Caco-2 (cell line): ENCODE measurements at regions of chr5 and their contacts with region 1.

Region 1: DNA sequence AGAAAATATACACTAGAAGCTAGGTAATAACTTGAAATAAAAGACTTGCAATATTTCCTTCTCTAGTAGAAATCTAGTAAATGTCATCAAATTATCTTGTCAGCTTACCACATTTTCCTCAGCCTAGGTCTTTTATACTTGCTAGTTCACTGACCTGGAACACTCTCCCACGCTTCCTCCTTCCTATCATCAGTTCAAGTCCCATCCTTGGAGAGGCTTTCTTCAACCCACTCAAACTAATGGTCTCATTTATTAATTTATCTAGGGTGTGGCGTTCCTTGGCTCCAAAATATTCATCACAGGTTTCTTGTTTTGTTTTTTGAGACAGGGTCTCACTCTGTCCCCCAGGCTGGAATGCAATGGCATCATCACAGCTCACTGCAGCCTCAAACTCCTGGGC is 2.9 kb downstream of the FAM13B start:
- DNase-seq: no peak
- H3K4me3 ChIP-seq: no peak overlapping the region
- H3K4me3 Mint-ChIP-seq: no peak overlapping the region
- H3K27ac Mint-ChIP-seq: no peak overlapping the region
- H3K4me1 ChIP-seq: peaks cover 12% of the 10 kb centered on the region
- H3K4me1 Mint-ChIP-seq: peaks cover 14% of the 10 kb centered on the region
- H3K27me3 ChIP-seq: no peaks in the 10 kb centered on the region
- H3K27me3 Mint-ChIP-seq: no peaks in the 10 kb centered on the region
- CTCF ChIP-seq: no peak

Region 2: DNA sequence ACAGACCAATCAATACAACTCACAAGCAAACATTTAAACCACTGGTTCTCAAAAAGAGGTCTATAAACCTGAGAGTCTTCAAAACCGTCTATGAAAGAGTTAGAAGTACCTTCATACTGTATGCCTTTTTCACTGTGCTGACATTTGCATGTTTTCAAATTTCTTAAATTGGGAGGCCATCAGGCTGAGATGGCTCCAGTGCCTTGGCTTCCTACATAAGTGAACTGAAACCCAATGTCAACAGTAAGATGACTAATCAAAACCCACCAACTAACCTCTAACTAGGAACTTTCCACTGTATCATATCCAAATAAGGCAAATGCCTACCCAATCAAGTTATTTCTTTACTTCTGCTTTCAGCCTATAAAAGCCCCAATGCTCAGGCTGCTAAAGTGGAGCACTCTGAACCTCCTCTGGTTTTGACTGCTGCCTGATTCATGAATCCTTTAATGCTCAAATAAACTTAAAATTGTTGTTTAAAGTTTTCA is 32.2 kb before region 1 on chr5:
- CTCF ChIA-PET with region 1: no interaction called
- POLR2A ChIA-PET with region 1: no interaction called
- intact Hi-C with region 1: no loop called
- DNase-seq: no peak
- H3K4me3 ChIP-seq: no peak overlapping the region
- H3K4me3 Mint-ChIP-seq: no peak overlapping the region
- H3K27ac Mint-ChIP-seq: no peak overlapping the region
- H3K4me1 ChIP-seq: no peaks in the 10 kb centered on the region
- H3K4me1 Mint-ChIP-seq: peaks cover 7% of the 10 kb centered on the region
- H3K27me3 ChIP-seq: no peaks in the 10 kb centered on the region
- H3K27me3 Mint-ChIP-seq: no peaks in the 10 kb centered on the region
- CTCF ChIP-seq: no peak

Region 3: GRCh38 chr5:138905541-138905940 is 875.6 kb after region 1 on chr5:
- CTCF ChIA-PET with region 1: no interaction called
- POLR2A ChIA-PET with region 1: interaction called, 19 read pairs
- intact Hi-C with region 1: no loop called
- DNase-seq: no peak
- H3K4me3 ChIP-seq: no peak overlapping the region
- H3K4me3 Mint-ChIP-seq: no peak overlapping the region
- H3K27ac Mint-ChIP-seq: no peak overlapping the region
- H3K4me1 ChIP-seq: no peaks in the 10 kb centered on the region
- H3K4me1 Mint-ChIP-seq: peaks cover 17% of the 10 kb centered on the region
- H3K27me3 ChIP-seq: no peaks in the 10 kb centered on the region
- H3K27me3 Mint-ChIP-seq: no peaks in the 10 kb centered on the region
- CTCF ChIP-seq: no peak